GM12878 (cell line): ENCODE measurements at regions of chr19 and their contacts with region 1.

Region 1: GRCh38 chr19:4400135-4400936 is at the start of gene SH3GL1:
- DNase-seq: peak; percentile 48
- ATAC-seq: peak; percentile 57
- H3K4me3 ChIP-seq: peak within 1 kb of the TSS; percentile 81
- H3K27ac ChIP-seq: peak within 1 kb of the TSS; percentile 92
- H3K4me1 ChIP-seq: peaks cover 3% of the 10 kb centered on the region; the same call in 1 of the 2 replicates
- H3K27me3 ChIP-seq: no peaks in the 10 kb centered on the region
- CTCF ChIP-seq: peak; percentile 93 to 98 (median 95)
- EP300 ChIP-seq: peak in 1 of 2 experiments; percentile 10; a peak in 1 of 4 replicates
- POLR2A ChIP-seq: peak; percentile 80
- RAD21 ChIP-seq: peak; percentile 63
- polyA plus RNA-seq, gene SH3GL1: 0.93 to 3.0 TPM

Region 2: DNA sequence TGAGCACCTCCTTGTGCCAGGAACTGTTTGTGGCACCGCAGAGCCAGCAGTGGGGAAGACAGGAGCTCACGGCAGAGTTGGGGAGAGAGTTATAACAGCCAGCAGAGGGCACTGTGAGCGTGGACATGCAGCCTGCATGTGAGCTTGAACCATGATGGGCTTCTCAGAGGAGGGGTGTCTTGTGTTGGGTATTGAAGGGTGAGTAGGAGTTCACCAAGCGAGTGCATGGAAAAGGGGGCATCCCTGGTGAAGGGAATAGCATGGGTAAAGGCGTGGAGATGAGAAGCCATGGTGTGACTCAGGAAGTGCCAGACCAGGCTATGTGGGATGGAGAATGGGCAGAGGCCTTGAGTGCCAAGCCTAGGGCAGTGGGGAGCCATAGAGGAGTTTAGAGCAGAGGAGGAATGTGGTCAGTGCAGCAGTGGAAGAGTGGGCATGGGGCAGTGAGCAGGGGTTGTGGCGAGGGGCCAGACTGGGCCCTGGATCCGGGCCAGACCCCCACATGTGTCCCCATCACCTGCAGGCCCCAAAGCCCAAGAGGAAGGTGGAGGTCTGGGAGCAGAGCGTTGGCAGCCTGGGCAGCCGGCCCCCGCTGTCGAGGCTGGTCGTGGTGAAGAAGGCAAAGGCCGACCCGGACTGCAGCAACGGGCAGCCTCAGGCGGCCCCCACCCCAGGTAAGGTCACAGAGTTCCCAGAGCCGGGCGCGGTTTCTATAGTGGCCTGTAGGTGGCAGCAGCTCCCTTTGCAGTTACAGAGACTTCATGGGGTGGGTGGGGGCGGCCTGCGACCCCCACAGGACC is 133.0 kb before region 1 on chr19:
- CTCF ChIA-PET with region 1: interaction called, 11 read pairs
- POLR2A ChIA-PET with region 1: interaction called, 6 read pairs
- RAD21 ChIA-PET with region 1: interaction called, 5 read pairs
- SMC1A ChIA-PET with region 1: no interaction called
- in situ Hi-C with region 1: no loop called
- intact Hi-C with region 1: loop called (anchors 5 kb)
- DNase-seq: no peak
- ATAC-seq: peak; percentile 92
- H3K4me3 ChIP-seq: no peak overlapping the region
- H3K27ac ChIP-seq: no peak overlapping the region
- H3K4me1 ChIP-seq: no peaks in the 10 kb centered on the region; the same call in 1 of the 2 replicates
- H3K27me3 ChIP-seq: no peaks in the 10 kb centered on the region
- CTCF ChIP-seq: peak; percentile 64 to 80 (median 73)
- EP300 ChIP-seq: no peak
- POLR2A ChIP-seq: 0 out of 2 replicates have a peak, but pooled peaks have one; percentile 34
- RAD21 ChIP-seq: peak; percentile 80

Region 3: GRCh38 chr19:4352701-4353121 is 47.6 kb before region 1 on chr19:
- CTCF ChIA-PET with region 1: interaction called, 10 read pairs
- POLR2A ChIA-PET with region 1: interaction called, 4 read pairs
- RAD21 ChIA-PET with region 1: interaction called, 3 read pairs
- SMC1A ChIA-PET with region 1: interaction called, 3 read pairs
- in situ Hi-C with region 1: no loop called
- intact Hi-C with region 1: no loop called
- DNase-seq: no peak
- ATAC-seq: peak; percentile 90
- H3K4me3 ChIP-seq: no peak overlapping the region
- H3K27ac ChIP-seq: no peak overlapping the region
- H3K4me1 ChIP-seq: no peaks in the 10 kb centered on the region
- H3K27me3 ChIP-seq: no peaks in the 10 kb centered on the region
- CTCF ChIP-seq: peak; percentile 57 to 91 (median 69)
- EP300 ChIP-seq: no peak
- POLR2A ChIP-seq: no peak
- RAD21 ChIP-seq: peak; percentile 73

Region 4: GRCh38 chr19:4375164-4376027 is 24.9 kb before region 1 on chr19:
- CTCF ChIA-PET with region 1: interaction called, 24 read pairs
- POLR2A ChIA-PET with region 1: interaction called, 110 read pairs
- RAD21 ChIA-PET with region 1: interaction called, 17 read pairs
- SMC1A ChIA-PET with region 1: interaction called, 27 read pairs
- in situ Hi-C with region 1: no loop called
- intact Hi-C with region 1: loop called (anchors 1 kb)
- DNase-seq: peak; percentile 90
- ATAC-seq: peak; percentile 78
- H3K4me3 ChIP-seq: peak overlapping the region; percentile 52
- H3K27ac ChIP-seq: peak overlapping the region; percentile 93
- H3K4me1 ChIP-seq: peaks cover 88% of the 10 kb centered on the region
- H3K27me3 ChIP-seq: no peaks in the 10 kb centered on the region
- CTCF ChIP-seq: peak; percentile 58 to 69 (median 58)
- EP300 ChIP-seq: no peak
- POLR2A ChIP-seq: peak; percentile 18; the same call in 1 of the 2 replicates
- RAD21 ChIP-seq: 0 out of 2 replicates have a peak, but pooled peaks have one; percentile 27

Region 5: GRCh38 chr19:4425537-4425936 is 25.2 kb after region 1 on chr19:
- CTCF ChIA-PET with region 1: no interaction called
- POLR2A ChIA-PET with region 1: no interaction called
- RAD21 ChIA-PET with region 1: no interaction called
- SMC1A ChIA-PET with region 1: no interaction called
- in situ Hi-C with region 1: no loop called
- intact Hi-C with region 1: no loop called
- DNase-seq: no peak
- ATAC-seq: no peak
- H3K4me3 ChIP-seq: no peak overlapping the region
- H3K27ac ChIP-seq: no peak overlapping the region
- H3K4me1 ChIP-seq: peaks cover 12% of the 10 kb centered on the region
- H3K27me3 ChIP-seq: no peaks in the 10 kb centered on the region
- CTCF ChIP-seq: no peak
- EP300 ChIP-seq: no peak
- POLR2A ChIP-seq: no peak
- RAD21 ChIP-seq: no peak

Region 6: GRCh38 chr19:4471403-4472173 is 71.3 kb after region 1 on chr19:
- CTCF ChIA-PET with region 1: interaction called, 7 read pairs
- POLR2A ChIA-PET with region 1: interaction called, 9 read pairs
- RAD21 ChIA-PET with region 1: interaction called, 10 read pairs
- SMC1A ChIA-PET with region 1: interaction called, 3 read pairs
- in situ Hi-C with region 1: no loop called
- intact Hi-C with region 1: no loop called
- DNase-seq: peak; percentile 100
- ATAC-seq: peak; percentile 94
- H3K4me3 ChIP-seq: peak overlapping the region; percentile 99
- H3K27ac ChIP-seq: peak overlapping the region; percentile 90
- H3K4me1 ChIP-seq: peaks cover 7% of the 10 kb centered on the region
- H3K27me3 ChIP-seq: no peaks in the 10 kb centered on the region
- CTCF ChIP-seq: no peak
- EP300 ChIP-seq: no peak
- POLR2A ChIP-seq: 0 out of 2 replicates have a peak, but pooled peaks have one; percentile 49
- RAD21 ChIP-seq: no peak

Region 7: GRCh38 chr19:4557971-4558941 is 157.9 kb after region 1 on chr19:
- CTCF ChIA-PET with region 1: no interaction called
- POLR2A ChIA-PET with region 1: no interaction called
- RAD21 ChIA-PET with region 1: no interaction called
- SMC1A ChIA-PET with region 1: no interaction called
- in situ Hi-C with region 1: no loop called
- intact Hi-C with region 1: no loop called
- DNase-seq: no peak
- ATAC-seq: peak; percentile 48; the same call in 2 of the 3 replicates
- H3K4me3 ChIP-seq: no peak overlapping the region
- H3K27ac ChIP-seq: no peak overlapping the region
- H3K4me1 ChIP-seq: no peaks in the 10 kb centered on the region
- H3K27me3 ChIP-seq: no peaks in the 10 kb centered on the region
- CTCF ChIP-seq: peak; percentile 77 to 100 (median 91)
- EP300 ChIP-seq: no peak
- POLR2A ChIP-seq: no peak
- RAD21 ChIP-seq: peak; percentile 40; the same call in 1 of the 2 replicates